Endothelial cell of umbilical vein (primary cell): ENCODE measurements at regions of chr4 and their contacts with region 1.

Region 1: DNA sequence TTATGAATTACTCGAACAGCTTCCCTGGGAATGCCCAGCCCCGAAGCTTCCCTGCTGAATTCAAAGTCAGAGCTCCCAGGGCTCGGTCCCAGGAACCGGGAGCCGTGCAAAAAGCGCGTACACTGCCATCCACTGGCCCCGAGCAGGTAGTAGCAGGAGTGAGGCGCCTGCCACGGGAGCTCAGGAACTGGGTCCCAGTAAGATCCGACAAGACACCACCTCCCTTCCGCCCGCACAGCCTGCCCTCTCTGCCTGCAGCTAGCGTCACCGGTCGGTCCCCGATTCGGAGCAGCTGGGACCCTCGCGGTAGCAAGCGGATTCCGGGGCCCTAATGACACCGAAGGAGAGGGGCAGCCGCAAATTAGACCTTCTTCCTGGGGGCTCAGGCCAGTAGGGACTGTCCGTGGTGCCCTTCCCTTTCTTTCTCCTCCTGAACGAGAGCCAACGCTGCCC is 1.2 kb downstream of the CORIN start:
- DNase-seq: peak; percentile 56
- H3K4me3 ChIP-seq: peak overlapping the region; percentile 15 to 57 (median 16)
- H3K27ac ChIP-seq: no peak overlapping the region
- H3K4me1 ChIP-seq: peaks cover 18% of the 10 kb centered on the region
- H3K27me3 ChIP-seq: peaks cover 2 to 8% of the 10 kb centered on the region in 2 experiments
- CTCF ChIP-seq: peak; percentile 53 to 74
- POLR2A ChIP-seq: no peak

Region 2: DNA sequence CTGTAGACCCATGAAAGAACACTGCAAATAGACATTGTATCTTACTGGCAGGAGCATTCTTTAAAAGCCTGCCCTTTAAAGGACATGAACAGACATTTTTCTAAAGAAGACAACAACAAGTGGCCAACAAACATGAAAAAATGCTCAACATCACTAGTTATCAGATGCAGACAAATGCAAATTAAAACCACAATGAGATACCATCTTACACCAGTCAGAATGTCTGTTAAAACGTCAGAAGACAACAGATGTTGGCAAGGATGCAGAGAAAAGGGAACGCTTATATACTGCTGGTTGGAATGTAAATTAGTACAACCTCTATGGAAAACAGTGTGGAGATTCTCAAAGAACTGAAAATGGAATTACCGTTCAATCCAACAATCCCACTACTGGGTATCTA is 274.4 kb before region 1 on chr4:
- CTCF ChIA-PET with region 1: no interaction called
- POLR2A ChIA-PET with region 1: no interaction called
- dilution Hi-C with region 1: no loop called
- intact Hi-C with region 1: loop called (anchors 10 kb)
- DNase-seq: no peak
- H3K4me3 ChIP-seq: no peak overlapping the region
- H3K27ac ChIP-seq: no peak overlapping the region
- H3K4me1 ChIP-seq: peaks cover 2% of the 10 kb centered on the region
- H3K27me3 ChIP-seq: no peaks in the 10 kb centered on the region
- CTCF ChIP-seq: no peak
- POLR2A ChIP-seq: no peak

Region 3: GRCh38 chr4:47686294-47686872 is 150.3 kb before region 1 on chr4:
- CTCF ChIA-PET with region 1: interaction called, 67 read pairs
- POLR2A ChIA-PET with region 1: no interaction called
- dilution Hi-C with region 1: no loop called
- intact Hi-C with region 1: loop called (anchors 1 kb)
- DNase-seq: peak; percentile 62
- H3K4me3 ChIP-seq: no peak overlapping the region
- H3K27ac ChIP-seq: no peak overlapping the region
- H3K4me1 ChIP-seq: no peaks in the 10 kb centered on the region
- H3K27me3 ChIP-seq: peaks cover 2 to 17% of the 10 kb centered on the region in 2 experiments
- CTCF ChIP-seq: peak; percentile 72 to 73
- POLR2A ChIP-seq: no peak

Region 4: GRCh38 chr4:47852136-47852535 is 15.5 kb after region 1 on chr4:
- CTCF ChIA-PET with region 1: interaction called, 20 read pairs
- POLR2A ChIA-PET with region 1: no interaction called
- dilution Hi-C with region 1: no loop called
- intact Hi-C with region 1: no loop called
- DNase-seq: peak; percentile 61
- H3K4me3 ChIP-seq: no peak overlapping the region
- H3K27ac ChIP-seq: no peak overlapping the region
- H3K4me1 ChIP-seq: peaks cover 4% of the 10 kb centered on the region
- H3K27me3 ChIP-seq: no peaks in the 10 kb centered on the region
- CTCF ChIP-seq: no peak
- POLR2A ChIP-seq: no peak

Region 5: DNA sequence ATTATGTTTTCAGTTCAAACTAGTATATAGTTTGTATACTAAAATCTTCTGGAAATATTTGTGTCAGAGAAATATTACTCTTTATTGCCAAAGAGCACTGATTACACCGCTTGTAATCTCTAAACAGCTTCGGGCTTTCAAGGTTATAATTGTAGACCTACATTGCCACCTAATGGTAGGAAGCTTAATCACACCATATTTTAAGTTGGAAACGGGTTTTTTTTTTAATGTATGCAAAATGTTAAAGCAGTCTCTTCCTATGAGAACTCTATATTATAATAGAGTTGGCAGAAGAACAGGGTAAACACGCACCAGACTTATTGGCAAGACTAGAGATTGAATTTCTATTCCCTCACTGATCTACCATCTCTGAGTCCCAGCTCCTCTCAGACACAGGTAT is 97.2 kb after region 1 on chr4:
- CTCF ChIA-PET with region 1: interaction called, 17 read pairs
- POLR2A ChIA-PET with region 1: no interaction called
- dilution Hi-C with region 1: no loop called
- intact Hi-C with region 1: loop called (anchors 5 kb)
- DNase-seq: peak; percentile 45
- H3K4me3 ChIP-seq: no peak overlapping the region
- H3K27ac ChIP-seq: no peak overlapping the region
- H3K4me1 ChIP-seq: peaks cover 3% of the 10 kb centered on the region
- H3K27me3 ChIP-seq: peaks cover 8 to 20% of the 10 kb centered on the region in 2 experiments
- CTCF ChIP-seq: peak; percentile 23 to 41
- POLR2A ChIP-seq: no peak